Activated CD8-positive, alpha-beta T cell treated with anti-CD3 and anti-CD28 coated beads, Interleukin-2, amount 10 ng/mL, durations not matched to agents 7 days and 5 days (primary cell): ENCODE measurements at regions of chr14 and their contacts with region 1.

Region 1: GRCh38 chr14:70816525-70816924 is 7.2 kb upstream of the MAP3K9 start:
- DNase-seq: no peak
- ATAC-seq: no peak
- H3K4me3 Mint-ChIP-seq: no peak overlapping the region
- H3K27ac Mint-ChIP-seq: no peak overlapping the region
- H3K4me1 Mint-ChIP-seq: peaks cover 36% of the 10 kb centered on the region
- H3K27me3 Mint-ChIP-seq: peaks cover 16% of the 10 kb centered on the region

Region 2: GRCh38 chr14:70714055-70714621 is 102.4 kb before region 1 on chr14:
- CTCF ChIA-PET with region 1: interaction called, 20 read pairs
- POLR2A ChIA-PET with region 1: no interaction called
- DNase-seq: peak; percentile 67
- ATAC-seq: no peak
- H3K4me3 Mint-ChIP-seq: no peak overlapping the region
- H3K27ac Mint-ChIP-seq: no peak overlapping the region
- H3K4me1 Mint-ChIP-seq: peaks cover 9% of the 10 kb centered on the region
- H3K27me3 Mint-ChIP-seq: peaks cover 6% of the 10 kb centered on the region

Region 3: GRCh38 chr14:70879448-70879847 is 62.9 kb after region 1 on chr14:
- CTCF ChIA-PET with region 1: interaction called, 73 read pairs
- POLR2A ChIA-PET with region 1: no interaction called
- DNase-seq: no peak
- ATAC-seq: no peak
- H3K4me3 Mint-ChIP-seq: no peak overlapping the region
- H3K27ac Mint-ChIP-seq: no peak overlapping the region
- H3K4me1 Mint-ChIP-seq: peaks cover 51% of the 10 kb centered on the region
- H3K27me3 Mint-ChIP-seq: no peaks in the 10 kb centered on the region

Region 4: GRCh38 chr14:70919774-70920173 is 103.2 kb after region 1 on chr14:
- CTCF ChIA-PET with region 1: interaction called, 11 read pairs
- POLR2A ChIA-PET with region 1: no interaction called
- DNase-seq: no peak
- ATAC-seq: peak; percentile 32
- H3K4me3 Mint-ChIP-seq: peak overlapping the region; percentile 37
- H3K27ac Mint-ChIP-seq: peak overlapping the region; percentile 84
- H3K4me1 Mint-ChIP-seq: peaks cover 82% of the 10 kb centered on the region
- H3K27me3 Mint-ChIP-seq: no peaks in the 10 kb centered on the region